CD4-positive, alpha-beta memory T cell (primary cell): ENCODE measurements at regions of chr3 and their contacts with region 1.

Region 1: GRCh38 chr3:126083913-126084767 is at the start of gene SLC41A3:
- DNase-seq: peak; percentile 80 to 89 (median 84)
- H3K4me3 ChIP-seq: peak within 1 kb of the TSS in 1 of 2 donors; percentile 64
- H3K4me3 Mint-ChIP-seq: peak within 1 kb of the TSS; percentile 88 to 94 (median 92)
- H3K27ac ChIP-seq: peak within 1 kb of the TSS; percentile 63
- H3K27ac Mint-ChIP-seq: peak within 1 kb of the TSS; percentile 90 to 98 (median 93)
- H3K4me1 ChIP-seq: peaks cover 26% of the 10 kb centered on the region
- H3K4me1 Mint-ChIP-seq: peaks cover 9 to 32% (median 20%) of the 10 kb centered on the region in 4 donors
- H3K27me3 ChIP-seq: no peaks in the 10 kb centered on the region
- H3K27me3 Mint-ChIP-seq: no peaks in the 10 kb centered on the region
- total RNA-seq, gene SLC41A3: 32.5 to 41.2 TPM

Region 2: DNA sequence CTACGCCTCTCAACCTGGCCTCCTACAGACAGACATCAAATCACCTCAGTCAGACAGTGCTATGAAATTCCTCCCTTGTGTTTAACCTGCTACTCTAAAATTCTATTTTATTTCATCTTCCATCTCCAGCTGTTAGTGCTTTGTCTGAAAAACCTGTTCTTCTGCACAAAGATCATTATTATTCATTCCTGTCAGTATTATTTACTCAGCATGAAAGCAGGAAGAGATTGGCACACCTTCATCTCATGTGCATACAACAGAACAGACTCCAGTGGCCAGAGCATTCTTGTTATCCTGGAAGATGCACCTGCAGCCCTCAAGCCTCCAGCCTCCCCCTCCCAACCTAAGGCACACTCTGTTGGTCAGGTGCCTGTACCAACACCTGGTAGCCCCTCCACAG is 117.0 kb before region 1 on chr3:
- CTCF ChIA-PET with region 1: no interaction called
- POLR2A ChIA-PET with region 1: no interaction called
- intact Hi-C with region 1: loop called (anchors 1 kb)
- DNase-seq: no peak
- H3K4me3 ChIP-seq: no peak overlapping the region
- H3K4me3 Mint-ChIP-seq: no peak overlapping the region
- H3K27ac ChIP-seq: no peak overlapping the region
- H3K27ac Mint-ChIP-seq: no peak overlapping the region
- H3K4me1 ChIP-seq: peaks cover 4% of the 10 kb centered on the region
- H3K4me1 Mint-ChIP-seq: peaks cover 3 to 4% (median 3%) of the 10 kb centered on the region in 4 donors
- H3K27me3 ChIP-seq: peaks cover 8% of the 10 kb centered on the region
- H3K27me3 Mint-ChIP-seq: peaks cover 12% of the 10 kb centered on the region in 2 donors

Region 3: GRCh38 chr3:126357295-126358037 is 273.3 kb after region 1 on chr3 and contains the start of gene KLF15:
- CTCF ChIA-PET with region 1: no interaction called
- POLR2A ChIA-PET with region 1: no interaction called
- intact Hi-C with region 1: loop called (anchors 5 kb)
- DNase-seq: peak; percentile 64 to 72 (median 66)
- H3K4me3 ChIP-seq: peak within 1 kb of the TSS; percentile 42 to 49
- H3K4me3 Mint-ChIP-seq: peak within 1 kb of the TSS; percentile 85 to 93 (median 90)
- H3K27ac ChIP-seq: no peak within 1 kb of the TSS
- H3K27ac Mint-ChIP-seq: peak within 1 kb of the TSS in 6 of 7 donors; percentile 48 to 84 (median 66)
- H3K4me1 ChIP-seq: peaks cover 9% of the 10 kb centered on the region
- H3K4me1 Mint-ChIP-seq: peaks cover 9 to 25% (median 12%) of the 10 kb centered on the region in 4 donors
- H3K27me3 ChIP-seq: peaks cover 40% of the 10 kb centered on the region
- H3K27me3 Mint-ChIP-seq: peaks cover 36 to 44% of the 10 kb centered on the region in 2 donors
- total RNA-seq, gene KLF15: 0.67 to 0.72 TPM

Region 4: GRCh38 chr3:126703512-126704462 is 619.6 kb after region 1 on chr3 and contains the start of gene CHCHD6:
- CTCF ChIA-PET with region 1: interaction called, 3 read pairs
- POLR2A ChIA-PET with region 1: no interaction called
- intact Hi-C with region 1: loop called (anchors 5 kb)
- DNase-seq: peak; percentile 93 to 98 (median 95)
- H3K4me3 ChIP-seq: peak within 1 kb of the TSS; percentile 34 to 81
- H3K4me3 Mint-ChIP-seq: peak within 1 kb of the TSS; percentile 91 to 98 (median 96)
- H3K27ac ChIP-seq: peak within 1 kb of the TSS; percentile 49
- H3K27ac Mint-ChIP-seq: peak within 1 kb of the TSS; percentile 88 to 97 (median 92)
- H3K4me1 ChIP-seq: peaks cover 18% of the 10 kb centered on the region
- H3K4me1 Mint-ChIP-seq: peaks cover 10 to 26% (median 17%) of the 10 kb centered on the region in 4 donors
- H3K27me3 ChIP-seq: no peaks in the 10 kb centered on the region
- H3K27me3 Mint-ChIP-seq: peaks cover 11 to 26% of the 10 kb centered on the region in 2 donors
- total RNA-seq, gene CHCHD6: 7.3 to 8.9 TPM